GM13977 (cell line): ENCODE measurements at regions of chr11 and their contacts with region 1.

Region 1: DNA sequence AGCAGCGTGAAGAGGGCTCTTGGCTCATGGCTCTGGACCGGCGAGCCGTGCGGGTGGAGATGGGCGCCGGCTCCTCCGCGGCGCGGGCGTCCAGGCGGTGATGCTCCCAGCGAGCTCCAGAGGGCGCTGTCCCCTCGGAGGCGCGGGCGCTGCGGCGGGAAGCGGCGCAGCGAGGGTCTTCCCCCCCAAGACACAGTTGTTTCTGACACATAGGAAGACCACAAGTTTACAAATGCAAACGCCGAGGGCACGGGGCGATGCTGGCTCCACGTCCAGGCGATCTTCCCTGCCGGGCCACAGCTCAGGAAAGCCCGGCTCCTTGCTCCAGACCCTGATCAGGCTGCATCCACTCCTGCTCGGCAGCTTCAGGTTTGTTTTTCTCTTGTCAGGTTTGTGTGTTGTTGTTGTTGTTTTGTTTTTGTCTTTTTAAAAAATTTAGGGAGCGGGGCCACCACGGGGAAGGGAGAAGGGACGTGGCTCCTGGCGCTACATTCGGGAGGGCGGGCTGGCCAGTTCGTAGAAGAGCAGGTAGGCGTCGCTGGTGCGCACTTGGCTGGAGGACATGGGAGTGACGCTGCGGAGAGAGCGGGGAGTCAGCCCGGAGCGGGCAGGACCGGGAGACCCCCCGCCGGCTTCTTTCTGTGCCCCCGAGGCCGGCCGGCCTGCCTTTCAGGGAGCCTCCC is 10.0 kb upstream of the MFRP start:
- DNase-seq: peak; percentile 91
- CTCF ChIP-seq: peak; percentile 94

Region 2: DNA sequence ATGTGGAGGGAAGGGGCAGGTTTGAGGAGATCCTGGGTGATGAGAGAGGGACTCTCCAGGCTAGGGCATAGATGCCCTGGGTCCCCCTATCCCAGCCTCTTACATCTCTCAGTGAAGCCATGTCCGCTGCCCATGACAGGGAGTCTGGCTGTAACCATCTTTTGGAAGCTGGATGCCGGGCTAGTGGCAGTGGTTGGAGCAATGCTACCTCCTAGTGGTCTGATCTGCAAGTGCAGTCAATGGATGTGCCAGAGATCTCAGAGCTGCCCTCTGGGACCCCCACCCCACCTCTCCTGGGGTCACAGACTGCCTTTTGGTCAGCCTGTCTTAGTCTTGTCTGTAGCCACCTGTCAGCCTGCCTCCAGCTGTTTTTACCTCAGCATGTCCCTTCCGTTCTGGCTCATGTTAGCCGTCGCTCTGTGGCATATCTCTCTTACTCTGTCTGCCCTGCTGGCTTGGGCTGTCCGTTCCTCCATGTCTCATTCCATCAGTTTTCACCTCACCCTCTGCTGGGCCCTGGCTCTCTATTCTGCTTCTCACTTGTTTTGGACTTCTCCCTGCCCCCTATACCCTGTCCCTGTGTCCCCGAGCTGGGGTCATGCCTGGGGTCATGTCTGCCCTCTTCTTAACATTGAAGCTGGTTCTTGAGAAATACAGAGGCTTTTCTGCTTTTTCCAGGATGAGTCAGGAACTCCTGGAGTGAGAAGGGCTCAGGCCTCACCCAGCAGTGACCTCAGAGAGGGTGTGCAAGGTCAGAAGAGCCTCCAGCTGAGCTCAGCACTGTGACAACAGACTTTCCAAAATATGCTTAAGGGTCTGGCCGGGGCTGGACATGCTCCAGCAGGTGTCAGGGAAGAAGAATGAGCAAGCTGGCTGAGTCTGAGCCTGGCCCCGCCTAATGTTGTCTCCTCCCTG is 118.4 kb after region 1 on chr11:
- in situ Hi-C with region 1: loop called (anchors 10 kb)
- DNase-seq: peak; percentile 75
- CTCF ChIP-seq: peak; percentile 90

Region 3: DNA sequence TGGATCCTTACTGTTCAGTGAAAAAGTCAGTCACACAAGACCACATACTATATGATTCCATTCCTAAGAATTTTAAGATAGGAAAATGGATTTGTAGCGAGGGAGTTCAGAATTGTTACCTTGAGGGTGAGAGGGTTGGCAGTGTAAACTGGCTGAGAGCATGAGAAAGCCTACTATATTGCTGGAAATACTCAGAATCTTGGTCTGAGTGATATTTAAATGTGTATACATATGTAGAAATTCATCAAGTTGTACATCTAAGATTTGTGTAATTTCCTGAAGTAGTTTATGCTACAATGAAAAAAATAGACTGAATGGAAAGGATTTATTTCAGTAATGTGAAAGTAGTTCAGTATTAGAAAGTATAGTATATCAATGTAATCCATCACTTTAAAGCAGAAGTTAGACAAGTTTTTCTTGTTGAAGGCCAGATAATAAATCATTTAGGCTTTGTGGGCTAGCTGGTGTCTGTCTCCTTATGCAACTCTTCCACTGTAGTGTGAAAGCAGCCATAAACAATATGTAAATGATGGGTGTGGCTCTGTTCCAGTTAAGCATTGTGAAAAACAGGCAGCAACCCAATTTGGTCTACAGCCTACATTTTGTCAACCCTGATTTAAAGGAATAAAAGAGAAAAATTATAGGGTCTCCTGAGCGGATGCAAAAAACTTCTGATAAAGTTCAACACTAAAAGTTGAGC is 193.7 kb after region 1 on chr11:
- in situ Hi-C with region 1: no loop called
- DNase-seq: no peak
- CTCF ChIP-seq: no peak